Right cardiac atrium (tissue), 5 donors: ENCODE measurements at regions of chr10 and their contacts with region 1.

Region 1: DNA sequence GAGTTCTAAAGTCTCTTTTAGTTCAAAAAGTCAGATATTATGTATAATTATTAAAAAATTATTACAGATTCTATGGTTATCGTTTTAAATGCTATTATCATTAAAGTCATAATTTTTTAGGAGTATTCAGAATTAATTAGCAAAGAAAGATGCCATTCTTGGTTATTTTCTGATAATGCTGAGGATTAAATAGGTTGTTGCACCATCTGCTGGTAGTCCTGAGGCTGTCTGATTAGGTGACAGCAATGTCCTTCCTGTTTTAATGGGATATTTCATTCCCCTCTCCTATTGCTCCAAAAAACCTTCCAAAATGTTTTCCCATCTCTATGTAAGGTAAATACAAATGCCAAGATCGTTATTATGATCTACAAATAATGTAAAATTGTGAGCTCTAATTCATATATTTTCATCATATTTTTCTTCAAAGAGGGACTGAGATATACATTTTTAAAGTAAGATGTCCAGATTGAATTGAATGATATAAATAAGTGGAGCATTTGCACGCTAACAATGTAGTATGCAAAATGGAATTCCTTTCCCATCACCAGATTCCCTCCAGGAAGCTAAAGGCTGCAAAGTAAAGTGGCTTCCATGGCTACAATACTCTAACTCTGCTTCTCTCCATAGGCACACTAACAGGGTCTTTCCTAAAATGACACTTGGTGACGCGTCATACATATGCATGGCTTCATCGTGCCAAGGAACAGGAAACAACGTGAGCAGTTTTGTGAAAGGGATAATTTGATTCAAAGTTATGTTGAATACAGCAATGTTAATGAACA is 58.8 kb upstream of the AKR1E2 start:
- DNase-seq: no peak
- ATAC-seq: peak; percentile 53 to 74
- H3K4me3 ChIP-seq: no peak overlapping the region
- H3K27ac ChIP-seq: peak overlapping the region; percentile 58
- H3K4me1 ChIP-seq: peaks cover 3% of the 10 kb centered on the region
- H3K27me3 ChIP-seq: no peaks in the 10 kb centered on the region

Region 2: DNA sequence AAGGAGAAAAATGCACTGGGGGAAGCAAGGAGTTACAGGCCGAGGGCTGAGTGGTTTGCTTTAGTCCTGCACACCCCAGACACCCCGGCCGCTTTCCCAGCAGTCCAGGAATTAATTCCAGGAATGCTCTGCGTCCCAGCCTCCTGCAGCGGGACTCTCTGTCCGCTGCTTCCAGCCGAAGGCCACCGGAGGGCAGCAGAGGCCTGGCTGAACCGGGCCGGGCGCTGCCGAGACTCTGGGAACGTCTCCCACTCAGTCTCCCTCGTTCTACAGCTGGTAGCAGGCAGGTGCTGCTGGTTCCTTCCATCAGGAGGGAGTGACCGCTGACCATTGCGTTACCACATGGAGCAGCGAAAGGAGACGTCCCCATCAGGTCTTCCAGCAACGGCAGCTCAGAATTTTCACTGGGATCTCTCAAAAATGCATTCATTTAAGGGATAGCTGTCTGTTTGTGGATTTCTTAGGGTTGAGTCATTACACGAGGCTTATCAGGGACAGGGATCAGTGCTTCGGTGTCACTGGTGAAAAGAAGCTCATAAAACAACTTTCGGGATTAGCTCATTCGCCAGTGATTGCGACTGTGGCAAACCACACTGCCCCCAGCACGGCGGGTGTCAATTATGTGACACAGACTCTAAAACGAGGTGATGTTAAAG is 1569.7 kb before region 1 on chr10:
- intact Hi-C with region 1: loop called (anchors 2 to 10 kb)
- DNase-seq: peak; percentile 80 to 92 (median 90)
- ATAC-seq: peak; percentile 93
- H3K4me3 ChIP-seq: no peak overlapping the region
- H3K27ac ChIP-seq: no peak overlapping the region
- H3K4me1 ChIP-seq: no peaks in the 10 kb centered on the region
- H3K27me3 ChIP-seq: no peaks in the 10 kb centered on the region

Region 3: GRCh38 chr10:3239066-3239919 is 1527.9 kb before region 1 on chr10:
- intact Hi-C with region 1: loop called in 1 of 4 experiments (anchors 5 kb)
- DNase-seq: peak; percentile 75 to 88 (median 86)
- ATAC-seq: peak; percentile 80 to 86
- H3K4me3 ChIP-seq: no peak overlapping the region
- H3K27ac ChIP-seq: no peak overlapping the region
- H3K4me1 ChIP-seq: no peaks in the 10 kb centered on the region
- H3K27me3 ChIP-seq: no peaks in the 10 kb centered on the region

Region 4: DNA sequence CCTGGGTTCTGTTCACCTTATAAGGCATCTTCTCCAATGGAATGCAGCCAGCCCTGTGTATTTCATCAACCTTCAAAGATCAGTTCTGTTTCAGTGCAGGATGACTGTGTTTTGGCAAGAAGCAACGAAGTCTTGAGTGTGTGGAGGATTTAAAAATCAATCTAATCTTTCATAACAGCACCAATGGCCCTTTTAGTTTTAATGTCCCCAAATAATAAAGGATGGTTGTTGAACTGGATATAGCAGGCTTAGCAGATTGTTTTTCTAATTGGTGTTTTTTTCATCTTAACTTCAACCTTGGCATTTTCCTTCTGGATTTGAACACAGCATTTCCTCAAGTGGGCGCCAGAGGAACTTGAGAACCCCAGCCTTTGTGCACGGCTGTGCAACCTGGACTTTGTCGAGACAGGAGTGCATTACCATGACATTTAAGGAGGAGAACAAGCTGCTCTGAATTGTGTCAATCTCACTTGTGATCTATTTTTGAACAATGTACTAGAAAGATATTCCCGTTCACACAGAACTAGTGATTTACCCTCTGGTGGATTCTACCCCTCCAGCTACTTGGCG is 254.5 kb before region 1 on chr10:
- intact Hi-C with region 1: loop called in 2 of 4 experiments (anchors 10 kb)
- DNase-seq: peak; percentile 49 to 83 (median 66)
- ATAC-seq: peak; percentile 74 to 77
- H3K4me3 ChIP-seq: no peak overlapping the region
- H3K27ac ChIP-seq: no peak overlapping the region
- H3K4me1 ChIP-seq: peaks cover 5% of the 10 kb centered on the region
- H3K27me3 ChIP-seq: no peaks in the 10 kb centered on the region

Region 5: GRCh38 chr10:4652111-4653010 is 114.9 kb before region 1 on chr10:
- intact Hi-C with region 1: no loop called
- DNase-seq: no peak
- ATAC-seq: no peak
- H3K4me3 ChIP-seq: no peak overlapping the region
- H3K27ac ChIP-seq: no peak overlapping the region
- H3K4me1 ChIP-seq: peaks cover 2% of the 10 kb centered on the region
- H3K27me3 ChIP-seq: no peaks in the 10 kb centered on the region

Region 6: DNA sequence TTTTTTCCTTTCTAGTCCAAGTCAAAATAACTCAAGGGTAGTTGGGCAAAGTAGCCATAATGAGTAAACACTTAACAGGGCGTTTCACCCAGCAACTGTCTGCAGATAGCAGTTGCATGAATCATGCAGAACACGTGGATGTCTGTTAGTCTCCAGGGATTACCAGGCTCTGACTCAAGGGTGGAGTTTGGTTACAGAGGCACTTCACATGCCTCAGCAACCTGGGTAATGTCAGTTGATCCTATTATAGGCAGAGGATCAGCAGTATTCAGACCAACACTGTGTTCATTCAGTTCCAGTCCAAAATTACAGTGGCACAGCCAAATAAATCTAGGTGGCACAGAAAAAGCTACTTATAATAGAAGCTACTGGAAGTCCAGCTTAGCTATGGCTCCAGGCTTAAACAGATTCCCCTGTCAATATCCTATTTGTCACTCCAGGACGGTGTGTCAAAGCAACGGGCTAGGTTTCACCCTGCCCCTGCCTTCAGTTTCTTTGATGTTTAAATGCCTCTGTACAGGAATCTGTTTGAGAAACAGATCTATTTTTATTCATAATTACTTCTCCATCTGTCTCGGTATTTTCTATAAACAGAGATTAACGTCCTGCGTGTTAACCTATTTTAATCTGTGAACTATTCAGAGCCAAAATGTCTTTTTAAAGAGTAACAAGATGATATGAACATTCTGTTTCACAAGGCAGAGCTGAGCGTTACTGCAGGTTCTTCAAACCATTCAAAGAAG is 103.9 kb before region 1 on chr10:
- intact Hi-C with region 1: loop called in 2 of 4 experiments (anchors 5 to 10 kb)
- DNase-seq: peak in 1 of 3 donors; percentile 49
- ATAC-seq: peak; percentile 93 to 96
- H3K4me3 ChIP-seq: no peak overlapping the region
- H3K27ac ChIP-seq: peak overlapping the region; percentile 100
- H3K4me1 ChIP-seq: no peaks in the 10 kb centered on the region
- H3K27me3 ChIP-seq: no peaks in the 10 kb centered on the region

Region 7: GRCh38 chr10:5117026-5117425 is 349.8 kb after region 1 on chr10:
- intact Hi-C with region 1: no loop called
- DNase-seq: no peak
- ATAC-seq: no peak
- H3K4me3 ChIP-seq: no peak overlapping the region
- H3K27ac ChIP-seq: no peak overlapping the region
- H3K4me1 ChIP-seq: no peaks in the 10 kb centered on the region
- H3K27me3 ChIP-seq: no peaks in the 10 kb centered on the region